ENCODE measurements at regions of chr22 and their contacts with region 1.

Region 1: GRCh38 chr22:30920407-30920806 is 48.2 kb downstream of the MORC2 start:
- DNase-seq: peak; percentile 82
- H3K4me3 Mint-ChIP-seq: peak overlapping the region; percentile 40
- H3K27ac Mint-ChIP-seq: no peak overlapping the region
- H3K4me1 Mint-ChIP-seq: peaks cover 15% of the 10 kb centered on the region
- H3K27me3 Mint-ChIP-seq: no peaks in the 10 kb centered on the region

Region 2: DNA sequence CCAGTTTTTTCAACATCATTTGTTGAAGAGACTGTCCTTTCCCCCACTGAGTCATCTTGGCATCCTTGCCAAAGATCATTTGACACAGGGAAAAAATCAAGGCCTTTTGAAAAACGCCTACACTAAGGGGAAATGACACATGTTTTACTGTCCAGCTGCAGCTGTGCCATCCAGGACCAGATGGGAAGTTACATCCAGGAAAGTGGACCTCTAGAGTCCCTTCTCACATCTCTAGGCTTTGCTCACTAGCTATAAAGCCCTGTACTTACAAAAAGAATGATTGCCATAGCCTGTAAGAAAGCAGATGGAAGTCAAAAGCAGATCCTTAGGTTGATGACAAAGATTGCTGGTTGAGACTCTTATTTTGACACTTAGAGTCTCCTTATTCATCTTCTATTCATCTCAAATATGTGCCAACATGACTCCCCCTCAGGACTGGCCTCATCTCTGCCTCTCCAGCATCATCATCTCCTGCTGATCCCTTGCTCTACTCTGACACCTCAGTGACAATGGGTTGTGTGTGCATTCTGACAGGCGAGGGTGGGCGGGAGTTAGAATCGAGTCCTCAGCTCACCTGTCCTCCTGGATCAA is 203.0 kb before region 1 on chr22:
- CTCF ChIA-PET with region 1: no interaction called
- POLR2A ChIA-PET with region 1: no interaction called
- DNase-seq: no peak
- H3K4me3 Mint-ChIP-seq: no peak overlapping the region
- H3K27ac Mint-ChIP-seq: no peak overlapping the region
- H3K4me1 Mint-ChIP-seq: peaks cover 7% of the 10 kb centered on the region
- H3K27me3 Mint-ChIP-seq: no peaks in the 10 kb centered on the region

Region 3: GRCh38 chr22:30763815-30764686 is 156.4 kb before region 1 on chr22:
- CTCF ChIA-PET with region 1: interaction called, 52 read pairs
- POLR2A ChIA-PET with region 1: no interaction called
- DNase-seq: peak; percentile 67
- H3K4me3 Mint-ChIP-seq: no peak overlapping the region
- H3K27ac Mint-ChIP-seq: no peak overlapping the region
- H3K4me1 Mint-ChIP-seq: no peaks in the 10 kb centered on the region
- H3K27me3 Mint-ChIP-seq: no peaks in the 10 kb centered on the region

Region 4: DNA sequence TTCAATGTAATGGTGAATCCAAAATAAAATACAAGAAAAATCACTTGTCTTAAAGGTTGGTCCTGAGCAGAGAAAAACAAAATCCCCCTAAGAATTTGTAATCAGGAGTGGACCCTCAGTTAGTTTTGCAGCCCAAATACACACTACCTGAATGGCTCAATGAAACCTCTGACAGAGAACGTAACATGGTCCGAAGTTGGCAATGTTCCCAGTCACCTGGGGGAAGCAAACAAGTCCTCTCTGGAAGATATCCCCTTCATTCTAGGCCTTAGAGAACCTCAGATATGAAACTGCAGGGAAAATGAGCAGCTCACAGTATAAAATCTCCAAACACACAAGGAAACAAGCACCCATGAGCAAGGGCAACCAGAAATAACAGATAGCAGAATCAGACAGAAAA is 10.0 kb before region 1 on chr22:
- CTCF ChIA-PET with region 1: interaction called, 16 read pairs
- POLR2A ChIA-PET with region 1: no interaction called
- DNase-seq: no peak
- H3K4me3 Mint-ChIP-seq: no peak overlapping the region
- H3K27ac Mint-ChIP-seq: no peak overlapping the region
- H3K4me1 Mint-ChIP-seq: no peaks in the 10 kb centered on the region
- H3K27me3 Mint-ChIP-seq: no peaks in the 10 kb centered on the region

Region 5: GRCh38 chr22:30940685-30941362 is 20.4 kb after region 1 on chr22:
- CTCF ChIA-PET with region 1: interaction called, 20 read pairs
- POLR2A ChIA-PET with region 1: interaction called, 26 read pairs
- DNase-seq: peak; percentile 62
- H3K4me3 Mint-ChIP-seq: peak overlapping the region; percentile 77
- H3K27ac Mint-ChIP-seq: peak overlapping the region; percentile 91
- H3K4me1 Mint-ChIP-seq: peaks cover 78% of the 10 kb centered on the region
- H3K27me3 Mint-ChIP-seq: no peaks in the 10 kb centered on the region